AG04450 (cell line): ENCODE measurements at regions of chr6 and their contacts with region 1.

Region 1: DNA sequence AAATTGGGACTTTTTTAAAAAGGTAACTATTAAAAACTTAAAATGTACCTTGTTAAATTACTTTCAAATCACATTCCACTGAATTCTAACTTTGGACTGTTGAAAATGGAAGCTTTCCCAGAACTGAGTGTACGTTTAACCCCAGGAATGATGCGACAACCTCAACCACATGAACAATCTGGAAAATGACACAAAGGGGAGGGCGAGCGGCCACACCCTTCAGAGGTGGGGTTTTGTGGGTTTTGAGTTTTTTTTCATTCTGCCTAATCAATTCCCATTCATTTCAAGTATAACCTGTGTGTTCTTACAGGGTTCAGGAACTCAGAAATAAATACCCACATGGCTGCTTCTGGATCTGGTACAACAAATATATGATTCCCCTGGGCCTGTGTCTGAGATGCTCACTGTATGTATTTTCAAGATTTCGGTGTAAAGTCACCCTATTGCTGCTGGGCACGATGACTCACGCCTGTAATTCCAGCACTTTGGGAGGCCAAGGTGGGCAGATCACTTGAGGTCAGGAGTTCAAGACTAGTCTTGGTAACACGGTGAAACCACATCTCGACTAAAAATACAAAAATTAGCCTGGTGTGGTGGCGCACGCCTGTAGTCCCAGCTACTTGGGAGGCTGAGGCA is 21.6 kb downstream of the CNKSR3 start:
- DNase-seq: no peak
- H3K4me3 ChIP-seq: no peak overlapping the region
- H3K27ac ChIP-seq: no peak overlapping the region
- H3K27me3 ChIP-seq: no peaks in the 10 kb centered on the region
- CTCF ChIP-seq: no peak

Region 2: GRCh38 chr6:154441995-154442310 is 47.0 kb before region 1 on chr6:
- CTCF ChIA-PET with region 1: no interaction called
- POLR2A ChIA-PET with region 1: no interaction called
- DNase-seq: no peak
- H3K4me3 ChIP-seq: no peak overlapping the region
- H3K27ac ChIP-seq: no peak overlapping the region
- H3K27me3 ChIP-seq: no peaks in the 10 kb centered on the region
- CTCF ChIP-seq: no peak

Region 3: GRCh38 chr6:154500769-154501577 is 12.1 kb after region 1 on chr6:
- CTCF ChIA-PET with region 1: interaction called, 28 read pairs
- POLR2A ChIA-PET with region 1: no interaction called
- DNase-seq: no peak
- H3K4me3 ChIP-seq: no peak overlapping the region
- H3K27ac ChIP-seq: no peak overlapping the region
- H3K27me3 ChIP-seq: no peaks in the 10 kb centered on the region
- CTCF ChIP-seq: peak; percentile 47